Sigmoid colon (tissue), 7 donors: ENCODE measurements at regions of chr5 and their contacts with region 1.

Region 1: GRCh38 chr5:142841511-142842265 is 71.5 kb downstream of the ARHGAP26 start:
- DNase-seq: peak; percentile 79
- H3K4me3 ChIP-seq: no peak overlapping the region
- H3K27ac ChIP-seq: peak overlapping the region in 3 of 4 donors; percentile 29 to 70 (median 67)
- H3K4me1 ChIP-seq: peaks cover 0 to 77% (median 69%) of the 10 kb centered on the region in 4 donors
- H3K27me3 ChIP-seq: no peaks in the 10 kb centered on the region
- CTCF ChIP-seq: no peak
- EP300 ChIP-seq: no peak
- POLR2A ChIP-seq: no peak

Region 2: GRCh38 chr5:142674531-142675469 is 166.9 kb before region 1 on chr5:
- intact Hi-C with region 1: no loop called
- DNase-seq: no peak
- H3K4me3 ChIP-seq: no peak overlapping the region
- H3K27ac ChIP-seq: peak overlapping the region in 3 of 4 donors; percentile 36 to 48 (median 46)
- H3K4me1 ChIP-seq: peaks cover 0 to 24% (median 15%) of the 10 kb centered on the region in 4 donors
- H3K27me3 ChIP-seq: no peaks in the 10 kb centered on the region
- CTCF ChIP-seq: no peak
- EP300 ChIP-seq: no peak
- POLR2A ChIP-seq: no peak

Region 3: GRCh38 chr5:142726188-142726731 is 115.4 kb before region 1 on chr5:
- intact Hi-C with region 1: no loop called
- DNase-seq: no peak
- H3K4me3 ChIP-seq: no peak overlapping the region
- H3K27ac ChIP-seq: peak overlapping the region in 2 of 4 donors; percentile 31 to 41
- H3K4me1 ChIP-seq: no peaks in the 10 kb centered on the region
- H3K27me3 ChIP-seq: no peaks in the 10 kb centered on the region
- CTCF ChIP-seq: no peak
- EP300 ChIP-seq: no peak
- POLR2A ChIP-seq: no peak

Region 4: GRCh38 chr5:142859037-142859436 is 17.3 kb after region 1 on chr5:
- intact Hi-C with region 1: loop called (anchors 2 kb)
- DNase-seq: no peak
- H3K4me3 ChIP-seq: no peak overlapping the region
- H3K27ac ChIP-seq: no peak overlapping the region
- H3K4me1 ChIP-seq: peaks cover 0 to 39% (median 29%) of the 10 kb centered on the region in 4 donors
- H3K27me3 ChIP-seq: no peaks in the 10 kb centered on the region
- CTCF ChIP-seq: no peak
- EP300 ChIP-seq: no peak
- POLR2A ChIP-seq: no peak

Region 5: DNA sequence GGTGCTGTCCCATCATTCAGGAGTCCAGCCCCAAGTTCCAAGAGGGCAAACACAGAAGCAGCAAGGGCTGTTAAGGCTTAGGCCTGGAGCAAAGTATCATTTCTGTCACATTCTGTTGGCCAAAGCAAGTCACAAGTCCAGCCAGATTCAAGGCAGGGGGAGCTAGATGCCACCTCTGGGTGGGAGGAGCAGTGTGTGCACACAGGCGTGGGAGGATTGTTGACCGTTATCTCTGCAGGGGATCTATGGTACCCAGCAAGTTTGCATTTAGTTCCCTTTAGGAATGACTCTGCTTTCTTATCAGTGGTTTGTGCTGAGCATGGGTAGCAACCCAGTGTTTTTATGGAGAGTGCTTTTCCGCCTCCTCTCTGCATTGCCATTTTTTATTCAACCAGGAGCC is 282.9 kb after region 1 on chr5:
- intact Hi-C with region 1: no loop called
- DNase-seq: no peak
- H3K4me3 ChIP-seq: no peak overlapping the region
- H3K27ac ChIP-seq: no peak overlapping the region
- H3K4me1 ChIP-seq: peaks cover 0 to 39% (median 20%) of the 10 kb centered on the region in 4 donors
- H3K27me3 ChIP-seq: no peaks in the 10 kb centered on the region
- CTCF ChIP-seq: no peak
- EP300 ChIP-seq: no peak
- POLR2A ChIP-seq: no peak